Cardiac septum (tissue), 1 donor: ENCODE measurements at regions of chr1 and their contacts with region 1.

Region 1: DNA sequence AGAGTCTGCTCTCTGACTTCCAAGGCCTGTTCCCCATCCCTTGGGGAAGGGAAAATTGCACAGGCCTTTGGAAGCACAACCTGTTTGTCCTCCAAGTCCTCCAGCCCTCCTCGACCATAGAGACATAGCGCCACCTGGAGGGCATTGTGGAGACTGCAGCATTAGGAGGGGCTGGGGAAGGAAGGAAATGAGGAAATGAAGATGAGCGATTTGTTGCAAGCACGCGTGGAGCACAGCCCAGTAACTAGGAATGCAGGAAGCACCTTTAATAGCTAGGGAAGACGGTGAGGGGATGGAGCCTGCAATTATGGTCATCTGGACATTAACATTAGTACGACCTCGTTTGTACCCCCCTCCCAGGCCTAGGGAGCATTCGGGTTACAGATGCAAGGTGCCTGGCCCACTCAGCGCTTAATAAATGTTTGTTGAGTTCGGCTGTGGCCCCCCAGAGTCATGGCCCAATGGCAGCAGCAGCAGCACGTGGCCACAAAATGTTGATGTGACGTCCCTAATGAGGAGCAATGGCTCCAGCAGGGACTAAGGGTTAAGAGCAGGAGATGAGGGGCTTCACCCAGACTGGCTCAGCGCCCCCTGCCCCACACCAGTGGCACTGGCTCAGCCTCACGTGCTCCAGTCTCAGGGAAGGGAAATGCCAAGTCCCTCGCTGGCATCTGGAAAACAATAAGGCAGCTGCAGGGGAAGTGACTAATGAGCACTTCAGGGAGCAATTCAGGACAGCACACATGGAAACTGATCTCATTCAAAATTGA is 8.0 kb upstream of the CAMK2N1 start:
- DNase-seq: peak; percentile 90

Region 2: DNA sequence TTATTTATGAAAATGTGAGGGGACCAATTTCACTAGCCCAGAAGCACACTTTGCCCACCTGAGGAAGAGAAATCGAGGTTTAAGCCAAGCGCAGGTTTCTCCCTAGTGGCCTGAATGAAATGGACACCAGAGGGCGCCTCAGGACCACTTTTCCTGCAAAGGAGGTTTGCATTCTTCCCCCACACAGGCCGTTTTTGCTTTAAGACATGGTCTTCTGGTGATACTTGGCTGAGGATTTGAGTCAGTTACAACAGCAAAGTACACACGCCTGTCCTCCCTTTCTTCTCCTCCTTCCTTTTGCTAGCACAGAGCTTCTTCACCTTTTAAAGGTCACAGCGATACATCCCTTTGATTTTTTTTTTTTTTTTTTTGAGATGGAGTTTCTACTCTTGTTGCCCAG is 576.0 kb before region 1 on chr1:
- intact Hi-C with region 1: loop called (anchors 2 kb)
- DNase-seq: no peak

Region 3: GRCh38 chr1:19974822-19975416 is 519.1 kb before region 1 on chr1:
- intact Hi-C with region 1: loop called (anchors 5 kb)
- DNase-seq: no peak

Region 4: GRCh38 chr1:20110679-20111078 is 383.3 kb before region 1 on chr1:
- intact Hi-C with region 1: no loop called
- DNase-seq: no peak

Region 5: GRCh38 chr1:20212685-20213331 is 281.2 kb before region 1 on chr1:
- intact Hi-C with region 1: loop called (anchors 2 kb)
- DNase-seq: no peak

Region 6: GRCh38 chr1:20361806-20362640 is 132.0 kb before region 1 on chr1:
- intact Hi-C with region 1: loop called (anchors 5 kb)
- DNase-seq: peak; percentile 80

Region 7: GRCh38 chr1:20376880-20377494 is 117.0 kb before region 1 on chr1:
- intact Hi-C with region 1: loop called (anchors 2 kb)
- DNase-seq: peak; percentile 76

Region 8: DNA sequence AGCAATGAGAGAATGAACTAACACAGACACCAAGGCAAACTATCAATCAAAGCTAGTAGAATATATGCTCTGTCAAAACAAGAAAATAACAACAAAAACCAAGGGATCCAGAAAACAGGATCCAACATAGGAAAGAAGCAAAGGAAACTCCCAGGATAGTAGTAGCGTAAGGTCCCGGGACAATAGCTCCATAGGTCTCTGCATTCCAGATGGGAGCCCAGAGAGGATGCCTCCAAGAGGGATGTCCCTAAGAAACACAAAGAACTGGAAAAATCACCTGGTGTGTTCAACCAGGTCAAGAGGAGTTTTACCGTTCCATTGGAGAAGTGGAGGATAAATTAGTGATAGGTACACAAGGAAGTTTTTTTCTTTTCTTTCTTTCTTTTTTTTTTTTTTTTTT is 52.6 kb after region 1 on chr1:
- intact Hi-C with region 1: no loop called
- DNase-seq: no peak